ENCODE measurements at regions of chr20 and their contacts with region 1.

Region 1: GRCh38 chr20:34817801-34818200 is 7.7 kb downstream of the NCOA6 start:
- DNase-seq: no peak
- CTCF ChIP-seq: no peak

Region 2: GRCh38 chr20:34831936-34832335 is 14.1 kb after region 1 on chr20:
- CTCF ChIA-PET with region 1: interaction called, 10 read pairs
- POLR2A ChIA-PET with region 1: no interaction called
- DNase-seq: no peak
- CTCF ChIP-seq: no peak

Measured in GM10248 (cell line).